Dendritic cell treated with granulocyte-macrophage colony-stimulating factor and Interleukin-4, amounts not matched to agents 40 ng/mL and 50 ng/mL, for 4 days (primary cell): ENCODE measurements at regions of chr7 and their contacts with region 1.

Region 1: DNA sequence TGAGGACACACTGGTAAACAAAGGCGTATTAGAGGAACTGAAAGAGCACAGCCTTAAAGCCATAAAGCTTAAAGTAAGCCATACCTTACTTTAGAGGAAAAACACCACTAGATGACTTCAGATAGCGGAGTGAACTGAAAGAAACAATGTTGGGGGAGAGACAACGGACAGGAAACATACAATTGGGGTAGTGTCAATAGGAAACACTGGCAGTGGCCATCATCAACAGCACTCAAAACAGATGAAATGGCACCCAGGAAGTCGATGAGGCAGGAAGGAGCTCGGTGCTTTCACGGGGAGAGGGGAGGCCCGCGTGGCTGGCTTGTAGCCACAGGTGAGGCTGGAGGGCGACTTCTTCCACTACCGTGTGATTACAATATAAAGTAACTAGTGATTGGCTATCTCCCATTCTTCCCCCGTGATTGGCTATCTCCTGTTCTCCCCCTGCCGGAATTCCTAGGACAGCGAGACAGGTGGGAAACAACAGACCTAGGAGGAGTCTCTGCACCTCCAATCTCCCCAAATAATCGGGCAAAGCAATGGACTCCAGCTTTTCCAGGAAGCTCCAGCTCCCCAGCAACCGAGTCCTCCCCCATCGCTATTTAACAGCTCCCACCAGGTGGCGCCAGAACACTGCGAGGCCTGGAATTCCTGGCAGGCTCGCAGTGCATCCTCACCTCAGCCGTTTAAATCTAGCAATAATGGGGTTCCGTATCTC is 2.4 kb upstream of the TAS2R38 start:
- H3K4me3 Mint-ChIP-seq: peak overlapping the region; percentile 76
- H3K27ac Mint-ChIP-seq: peak overlapping the region; percentile 80
- H3K4me1 Mint-ChIP-seq: peaks cover 16% of the 10 kb centered on the region
- H3K27me3 Mint-ChIP-seq: no peaks in the 10 kb centered on the region

Region 2: DNA sequence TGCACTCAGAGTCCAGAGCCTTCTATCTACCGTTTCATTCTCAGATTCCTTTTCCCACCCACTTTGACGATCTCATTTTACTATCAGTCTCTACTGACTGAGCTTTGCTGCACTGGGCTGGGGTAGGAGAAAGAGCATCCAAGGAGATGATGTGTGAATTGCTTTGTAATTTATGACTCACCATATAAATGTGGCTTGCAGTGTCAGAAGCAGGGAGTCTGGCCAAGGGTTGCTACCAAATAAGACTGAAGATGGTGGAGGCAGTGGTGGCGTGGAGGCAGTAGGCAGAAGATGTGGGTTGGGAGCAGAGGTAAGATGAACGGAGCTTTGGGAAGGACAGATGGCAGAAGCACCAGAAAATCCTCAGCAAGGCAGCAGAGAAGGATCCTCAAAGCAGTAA is 498.1 kb before region 1 on chr7:
- intact Hi-C with region 1: no loop called
- H3K4me3 Mint-ChIP-seq: no peak overlapping the region
- H3K27ac Mint-ChIP-seq: no peak overlapping the region
- H3K4me1 Mint-ChIP-seq: no peaks in the 10 kb centered on the region
- H3K27me3 Mint-ChIP-seq: peaks cover 3% of the 10 kb centered on the region

Region 3: GRCh38 chr7:141754939-141755338 is 221.0 kb before region 1 on chr7:
- intact Hi-C with region 1: loop called (anchors 10 kb)
- H3K4me3 Mint-ChIP-seq: no peak overlapping the region
- H3K27ac Mint-ChIP-seq: no peak overlapping the region
- H3K4me1 Mint-ChIP-seq: no peaks in the 10 kb centered on the region
- H3K27me3 Mint-ChIP-seq: no peaks in the 10 kb centered on the region

Region 4: GRCh38 chr7:141889321-141889720 is 86.6 kb before region 1 on chr7:
- intact Hi-C with region 1: no loop called
- H3K4me3 Mint-ChIP-seq: no peak overlapping the region
- H3K27ac Mint-ChIP-seq: peak overlapping the region; percentile 10
- H3K4me1 Mint-ChIP-seq: peaks cover 49% of the 10 kb centered on the region
- H3K27me3 Mint-ChIP-seq: no peaks in the 10 kb centered on the region

Region 5: DNA sequence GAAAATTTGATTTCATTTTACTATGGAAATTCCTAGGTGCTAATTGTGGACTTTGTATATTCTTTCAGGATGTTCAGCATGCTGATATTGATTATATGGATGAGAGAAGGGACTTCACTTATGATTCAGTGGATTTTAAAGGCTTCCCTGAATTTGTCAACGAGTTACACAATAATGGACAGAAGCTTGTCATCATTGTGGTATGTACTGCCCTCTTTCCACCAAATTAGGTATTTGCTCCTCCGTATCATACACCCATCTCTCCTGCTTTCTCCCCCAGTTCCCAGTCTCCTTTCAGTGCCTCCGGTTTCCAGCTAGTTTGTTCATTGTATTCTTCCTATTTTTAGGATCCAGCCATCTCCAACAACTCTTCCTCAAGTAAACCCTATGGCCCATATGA is 54.3 kb after region 1 on chr7:
- intact Hi-C with region 1: no loop called
- H3K4me3 Mint-ChIP-seq: no peak overlapping the region
- H3K27ac Mint-ChIP-seq: no peak overlapping the region
- H3K4me1 Mint-ChIP-seq: peaks cover 19% of the 10 kb centered on the region
- H3K27me3 Mint-ChIP-seq: no peaks in the 10 kb centered on the region

Region 6: GRCh38 chr7:142104550-142105527 is 128.9 kb after region 1 on chr7:
- intact Hi-C with region 1: loop called (anchors 10 kb)
- H3K4me3 Mint-ChIP-seq: peak overlapping the region; percentile 67
- H3K27ac Mint-ChIP-seq: peak overlapping the region; percentile 64
- H3K4me1 Mint-ChIP-seq: peaks cover 54% of the 10 kb centered on the region
- H3K27me3 Mint-ChIP-seq: peaks cover 1% of the 10 kb centered on the region

Region 7: DNA sequence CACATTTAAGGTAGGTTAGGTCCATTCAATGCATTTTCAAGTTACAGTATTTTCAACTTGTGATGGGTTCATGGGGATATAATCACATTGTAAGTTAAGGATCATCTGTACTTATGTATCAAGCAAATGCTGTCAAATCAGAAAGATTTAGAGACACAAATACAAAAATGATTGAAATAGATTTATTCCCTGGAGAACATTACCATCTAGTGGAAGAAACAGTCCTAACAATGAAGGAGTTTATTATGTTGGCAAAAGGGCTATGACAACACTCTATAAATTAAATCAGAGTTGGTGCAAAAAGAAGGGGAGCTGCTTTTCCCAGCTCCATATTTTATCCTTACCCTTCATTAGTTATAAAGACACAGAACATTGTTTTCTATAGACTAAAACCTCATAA is 212.9 kb after region 1 on chr7:
- intact Hi-C with region 1: loop called (anchors 1 kb)
- H3K4me3 Mint-ChIP-seq: no peak overlapping the region
- H3K27ac Mint-ChIP-seq: no peak overlapping the region
- H3K4me1 Mint-ChIP-seq: peaks cover 19% of the 10 kb centered on the region
- H3K27me3 Mint-ChIP-seq: peaks cover 14% of the 10 kb centered on the region

Region 8: DNA sequence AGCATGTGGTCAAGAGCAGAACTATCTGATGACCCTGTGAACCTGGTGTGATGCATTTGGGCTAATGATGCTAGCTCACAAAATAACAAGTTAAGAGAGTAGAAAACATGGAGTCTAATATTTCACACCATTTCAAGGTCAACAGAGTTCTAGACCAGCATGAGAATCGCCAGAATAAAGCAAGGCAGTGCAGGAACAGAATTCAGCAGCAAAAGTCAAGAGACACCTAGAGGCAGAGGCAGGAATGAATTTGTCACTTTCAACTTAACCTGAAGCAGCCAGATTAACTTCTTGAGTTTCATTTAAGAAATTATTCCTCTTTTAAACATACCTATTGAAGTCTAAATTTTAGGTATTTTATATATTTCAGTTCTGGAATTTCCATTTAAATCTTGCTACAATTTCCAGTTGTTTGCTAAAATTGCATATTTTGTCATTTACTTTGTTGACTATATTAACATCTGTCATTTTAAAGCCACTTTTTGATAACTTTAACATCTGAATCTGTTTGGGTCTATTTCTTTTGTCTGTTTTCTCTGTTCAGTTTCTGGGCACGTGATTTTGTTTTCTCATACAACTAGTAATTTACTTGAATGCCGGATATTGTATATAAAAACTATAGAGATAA is 326.1 kb after region 1 on chr7:
- intact Hi-C with region 1: loop called (anchors 10 kb)
- H3K4me3 Mint-ChIP-seq: no peak overlapping the region
- H3K27ac Mint-ChIP-seq: no peak overlapping the region
- H3K4me1 Mint-ChIP-seq: peaks cover 22% of the 10 kb centered on the region
- H3K27me3 Mint-ChIP-seq: peaks cover 2% of the 10 kb centered on the region